ENCODE measurements at regions of chr22 and their contacts with region 1.

Region 1: DNA sequence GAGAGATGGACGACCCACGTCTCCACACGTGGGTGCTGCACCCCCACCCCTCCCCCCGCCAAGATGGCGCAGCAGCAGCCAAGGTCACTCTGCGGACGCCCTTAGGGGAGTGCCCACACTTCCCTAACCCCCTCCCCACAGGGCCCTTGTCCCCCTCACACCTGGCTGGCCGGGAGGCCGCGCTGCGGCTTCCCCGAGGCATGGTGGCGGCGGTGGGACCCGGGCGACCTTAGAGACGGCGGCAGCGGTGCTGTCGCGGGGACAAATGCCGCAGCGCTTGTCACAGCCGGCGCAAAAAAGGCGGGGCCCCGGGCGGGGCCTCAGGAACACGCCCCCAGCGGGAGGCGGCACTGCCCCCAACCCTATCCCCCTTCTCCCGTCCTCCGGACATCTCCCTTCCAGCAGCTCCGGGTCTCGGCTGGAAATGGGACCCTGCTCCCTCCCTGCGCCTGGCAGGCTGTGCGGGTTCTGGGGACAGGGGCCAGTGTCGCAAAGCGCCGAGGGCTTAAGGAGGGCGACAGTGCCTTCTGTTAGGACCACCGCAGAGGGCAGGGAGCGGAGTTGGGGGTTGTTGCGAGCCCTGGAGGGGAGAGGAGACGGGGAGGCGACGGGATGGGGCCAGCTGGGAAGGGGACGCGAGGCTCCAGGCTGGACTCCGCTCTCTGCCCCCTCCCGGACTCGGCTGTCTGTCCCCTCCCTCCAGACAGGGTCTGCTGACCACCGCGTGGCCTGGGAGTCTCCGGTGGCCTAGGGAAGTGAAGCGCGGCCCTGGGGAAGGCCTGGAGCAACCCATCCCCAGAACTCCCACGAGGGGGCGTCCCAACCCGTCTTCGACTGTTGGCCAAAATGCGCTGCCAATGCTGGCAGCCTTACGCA is at the start of gene CHCHD10:
- DNase-seq: peak; percentile 89 to 92
- H3K4me3 ChIP-seq: peak within 1 kb of the TSS; percentile 75
- H3K4me3 Mint-ChIP-seq: peak within 1 kb of the TSS; percentile 87
- H3K27ac Mint-ChIP-seq: peak within 1 kb of the TSS; percentile 78
- H3K4me1 ChIP-seq: peaks cover 22% of the 10 kb centered on the region
- H3K4me1 Mint-ChIP-seq: no peaks in the 10 kb centered on the region
- H3K27me3 ChIP-seq: no peaks in the 10 kb centered on the region
- H3K27me3 Mint-ChIP-seq: no peaks in the 10 kb centered on the region
- CTCF ChIP-seq: peak; percentile 83 to 84
- total RNA-seq, gene CHCHD10: 178 and 189 TPM in 2 replicates

Region 2: GRCh38 chr22:23750714-23751440 is 17.0 kb before region 1 on chr22 and contains the start of gene ZNF70:
- CTCF ChIA-PET with region 1: interaction called, 5 read pairs
- POLR2A ChIA-PET with region 1: interaction called, 10 read pairs
- intact Hi-C with region 1: loop called (anchors 1 kb)
- DNase-seq: peak; percentile 92 to 93
- H3K4me3 ChIP-seq: peak within 1 kb of the TSS; percentile 85
- H3K4me3 Mint-ChIP-seq: peak within 1 kb of the TSS; percentile 89
- H3K27ac Mint-ChIP-seq: peak within 1 kb of the TSS; percentile 77
- H3K4me1 ChIP-seq: 0 out of 2 replicates have a peak, but pooled peaks cover 3% of the 10 kb centered on the region
- H3K4me1 Mint-ChIP-seq: peaks cover 11% of the 10 kb centered on the region
- H3K27me3 ChIP-seq: no peaks in the 10 kb centered on the region
- H3K27me3 Mint-ChIP-seq: no peaks in the 10 kb centered on the region
- CTCF ChIP-seq: peak in 1 of 2 experiments; percentile 61
- total RNA-seq, gene ZNF70: 5.4 and 5.8 TPM in 2 replicates

Region 3: DNA sequence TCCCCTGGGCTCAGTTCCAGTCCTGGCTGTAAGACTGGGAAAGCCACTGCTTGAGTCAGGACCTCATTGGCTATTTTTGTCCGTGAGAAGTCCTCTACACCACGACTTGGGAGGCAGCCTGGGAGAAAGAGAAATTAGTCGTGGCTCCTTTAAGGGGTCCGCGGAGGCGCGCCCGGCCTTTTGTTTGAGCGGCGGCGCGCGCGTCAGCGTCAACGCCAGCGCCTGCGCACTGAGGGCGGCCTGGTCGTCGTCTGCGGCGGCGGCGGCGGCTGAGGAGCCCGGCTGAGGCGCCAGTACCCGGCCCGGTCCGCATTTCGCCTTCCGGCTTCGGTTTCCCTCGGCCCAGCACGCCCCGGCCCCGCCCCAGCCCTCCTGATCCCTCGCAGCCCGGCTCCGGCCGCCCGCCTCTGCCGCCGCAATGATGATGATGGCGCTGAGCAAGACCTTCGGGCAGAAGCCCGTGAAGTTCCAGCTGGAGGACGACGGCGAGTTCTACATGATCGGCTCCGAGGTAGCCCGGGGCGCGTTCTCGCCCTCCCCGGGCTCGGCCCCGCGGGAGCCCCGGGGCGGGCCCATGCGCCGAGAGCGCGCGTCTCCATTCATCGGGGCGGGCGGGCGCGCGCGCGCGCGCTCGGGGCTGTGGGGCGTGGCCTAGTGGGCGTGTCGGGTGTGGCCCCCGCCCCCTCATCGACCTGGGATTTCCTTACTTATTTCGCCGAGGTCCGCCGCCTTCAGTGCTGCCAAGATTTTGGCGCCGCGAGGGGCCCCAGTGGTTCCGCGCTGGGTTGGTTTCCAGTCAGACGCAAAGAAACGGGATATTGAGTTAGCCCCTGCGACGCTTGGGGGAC is 19.1 kb after region 1 on chr22 and contains the start of gene SMARCB1:
- CTCF ChIA-PET with region 1: interaction called, 4 read pairs
- POLR2A ChIA-PET with region 1: interaction called, 3 read pairs
- intact Hi-C with region 1: loop called (anchors 1 kb)
- DNase-seq: peak; percentile 84 to 91
- H3K4me3 ChIP-seq: peak within 1 kb of the TSS; percentile 94
- H3K4me3 Mint-ChIP-seq: peak within 1 kb of the TSS; percentile 89
- H3K27ac Mint-ChIP-seq: peak within 1 kb of the TSS; percentile 36
- H3K4me1 ChIP-seq: peaks cover 13% of the 10 kb centered on the region
- H3K4me1 Mint-ChIP-seq: no peaks in the 10 kb centered on the region
- H3K27me3 ChIP-seq: no peaks in the 10 kb centered on the region
- H3K27me3 Mint-ChIP-seq: no peaks in the 10 kb centered on the region
- CTCF ChIP-seq: no peak
- total RNA-seq, gene SMARCB1: 154 and 157 TPM in 2 replicates

Region 4: GRCh38 chr22:23838681-23839468 is 71.0 kb after region 1 on chr22 and contains the start of gene DERL3:
- CTCF ChIA-PET with region 1: no interaction called
- POLR2A ChIA-PET with region 1: interaction called, 3 read pairs
- intact Hi-C with region 1: loop called (anchors 2 kb)
- DNase-seq: peak; percentile 99
- H3K4me3 ChIP-seq: peak within 1 kb of the TSS; percentile 71
- H3K4me3 Mint-ChIP-seq: peak within 1 kb of the TSS; percentile 95
- H3K27ac Mint-ChIP-seq: peak within 1 kb of the TSS; percentile 100
- H3K4me1 ChIP-seq: no peaks in the 10 kb centered on the region
- H3K4me1 Mint-ChIP-seq: peaks cover 7% of the 10 kb centered on the region
- H3K27me3 ChIP-seq: no peaks in the 10 kb centered on the region
- H3K27me3 Mint-ChIP-seq: no peaks in the 10 kb centered on the region
- CTCF ChIP-seq: no peak
- total RNA-seq, gene DERL3: 4.4 and 5.4 TPM in 2 replicates

Region 5: DNA sequence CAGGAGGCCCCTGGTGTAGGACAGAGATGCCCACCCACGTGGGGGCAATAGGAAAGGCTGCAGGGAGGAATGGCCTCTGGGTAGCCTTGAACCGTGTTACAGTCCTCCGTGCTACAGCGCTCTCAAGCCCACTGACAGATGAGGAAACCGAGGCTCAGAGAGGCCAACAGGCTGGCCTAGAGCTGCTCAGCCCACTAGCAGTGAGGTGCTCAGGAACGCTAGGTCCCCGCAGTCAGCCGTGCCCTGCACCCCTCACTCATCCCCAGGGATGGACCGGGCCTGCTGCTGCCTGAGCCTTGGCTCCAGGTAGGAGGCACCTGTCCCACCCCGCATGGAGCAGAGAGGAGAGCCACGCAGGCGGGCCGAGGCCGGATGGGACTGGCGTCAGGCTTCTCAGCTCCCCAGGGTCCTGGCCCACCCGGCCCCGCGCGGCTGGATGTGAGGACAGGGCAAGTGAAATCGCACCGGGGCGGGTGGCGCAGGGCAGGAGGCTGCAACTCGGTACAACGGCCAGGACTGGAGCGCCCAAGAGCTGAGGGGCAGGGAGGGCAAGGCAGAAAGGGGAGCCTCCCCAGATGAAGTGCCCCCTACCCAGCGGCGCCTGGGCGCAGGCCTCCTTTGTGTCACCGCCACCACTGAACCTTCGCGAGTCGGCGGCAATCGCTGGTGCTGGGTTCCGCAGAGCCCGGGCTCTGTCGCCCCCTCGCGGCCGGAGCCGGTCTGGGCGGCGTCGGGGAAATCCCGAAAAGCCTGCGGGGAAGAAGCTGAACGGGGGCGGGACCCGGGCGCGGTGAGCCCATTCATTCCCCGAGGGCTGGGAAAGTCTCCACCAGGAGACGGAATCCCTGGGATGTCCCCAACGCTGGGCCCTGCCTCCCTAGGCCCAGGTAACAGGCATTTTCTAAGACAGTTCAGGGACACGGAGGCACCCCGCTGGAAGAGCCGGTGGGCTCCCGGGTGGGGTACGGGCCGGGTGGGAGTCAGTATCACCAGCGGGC is 81.4 kb after region 1 on chr22:
- CTCF ChIA-PET with region 1: interaction called, 18 read pairs
- POLR2A ChIA-PET with region 1: interaction called, 3 read pairs
- intact Hi-C with region 1: no loop called
- DNase-seq: peak; percentile 85 to 95
- H3K4me3 ChIP-seq: no peak overlapping the region
- H3K4me3 Mint-ChIP-seq: peak overlapping the region; percentile 40
- H3K27ac Mint-ChIP-seq: no peak overlapping the region
- H3K4me1 ChIP-seq: peaks cover 8% of the 10 kb centered on the region
- H3K4me1 Mint-ChIP-seq: no peaks in the 10 kb centered on the region
- H3K27me3 ChIP-seq: no peaks in the 10 kb centered on the region
- H3K27me3 Mint-ChIP-seq: no peaks in the 10 kb centered on the region
- CTCF ChIP-seq: peak; percentile 92 to 96

Region 6: DNA sequence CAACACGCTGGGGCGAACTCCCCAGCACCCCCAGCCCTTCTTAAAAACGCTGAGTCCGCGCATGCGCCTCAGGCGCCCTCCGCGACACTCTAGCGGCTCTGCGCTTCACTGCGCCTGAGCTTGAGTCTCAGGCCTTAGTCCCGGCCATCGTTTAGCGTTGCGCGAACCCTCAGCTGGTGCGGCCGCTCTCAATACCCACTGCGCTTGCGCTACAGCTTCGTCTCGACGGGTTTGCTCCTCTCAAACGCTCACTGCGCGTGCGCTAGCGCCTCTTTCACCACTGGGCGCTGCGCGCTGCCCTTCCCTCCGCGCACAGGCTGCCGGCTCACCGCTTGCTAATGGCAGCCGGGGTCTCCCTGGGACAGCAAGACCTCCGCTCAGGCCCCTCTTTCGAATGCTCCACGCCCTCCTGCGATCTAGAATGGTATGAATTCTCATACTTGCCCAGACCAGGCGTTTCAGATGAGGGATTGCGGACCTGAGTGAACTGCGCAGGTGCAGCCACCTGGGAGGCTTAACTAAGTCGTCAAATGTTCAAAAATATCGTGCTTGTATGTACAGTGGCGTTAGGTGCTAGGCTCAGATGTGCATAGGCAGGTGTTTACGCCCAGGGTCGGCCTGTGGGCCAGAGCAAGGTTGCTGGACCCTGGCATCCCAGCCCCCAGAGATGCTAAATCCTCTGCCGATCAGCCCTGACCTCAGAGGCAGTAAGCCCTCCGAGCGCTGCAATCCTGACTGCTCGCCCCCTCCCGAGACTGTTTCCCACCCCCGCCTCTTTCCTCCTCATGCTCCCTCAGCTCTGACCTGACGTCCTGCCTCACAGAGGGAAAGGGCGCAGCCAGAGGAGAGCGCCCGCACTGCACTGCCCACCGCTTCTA is 89.9 kb after region 1 on chr22 and contains the start of gene SLC2A11:
- CTCF ChIA-PET with region 1: interaction called, 7 read pairs
- POLR2A ChIA-PET with region 1: interaction called, 20 read pairs
- intact Hi-C with region 1: no loop called
- DNase-seq: peak; percentile 95 to 97
- H3K4me3 ChIP-seq: peak within 1 kb of the TSS; percentile 53
- H3K4me3 Mint-ChIP-seq: peak within 1 kb of the TSS; percentile 80
- H3K27ac Mint-ChIP-seq: peak within 1 kb of the TSS; percentile 79
- H3K4me1 ChIP-seq: 0 out of 2 replicates have a peak, but pooled peaks cover 3% of the 10 kb centered on the region
- H3K4me1 Mint-ChIP-seq: peaks cover 7% of the 10 kb centered on the region
- H3K27me3 ChIP-seq: no peaks in the 10 kb centered on the region
- H3K27me3 Mint-ChIP-seq: no peaks in the 10 kb centered on the region
- CTCF ChIP-seq: no peak
- total RNA-seq, gene SLC2A11: 29.5 and 32.4 TPM in 2 replicates

Region 7: DNA sequence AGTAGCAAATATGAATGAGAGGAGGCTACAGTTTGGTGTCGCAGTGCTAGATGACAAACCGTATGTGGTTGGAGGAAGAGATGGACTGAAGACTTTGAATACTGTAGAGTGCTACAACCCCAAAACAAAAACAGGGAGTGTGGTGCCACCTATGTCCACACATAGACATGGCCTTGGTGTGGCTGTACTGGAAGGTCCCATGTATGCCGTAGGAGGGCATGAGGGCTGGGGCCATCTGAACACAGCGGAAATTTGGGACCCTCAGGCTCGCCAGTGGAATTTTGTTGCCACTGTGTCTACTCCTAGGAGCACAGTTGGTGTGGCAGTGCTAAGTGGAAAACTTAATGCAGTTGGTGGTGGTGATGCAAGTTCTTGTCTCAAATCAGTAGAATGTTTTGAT is 160.3 kb after region 1 on chr22:
- CTCF ChIA-PET with region 1: no interaction called
- POLR2A ChIA-PET with region 1: no interaction called
- intact Hi-C with region 1: no loop called
- DNase-seq: no peak
- H3K4me3 ChIP-seq: no peak overlapping the region
- H3K4me3 Mint-ChIP-seq: no peak overlapping the region
- H3K27ac Mint-ChIP-seq: peak overlapping the region; percentile 27
- H3K4me1 ChIP-seq: no peaks in the 10 kb centered on the region; the same call in 1 of the 2 replicates
- H3K4me1 Mint-ChIP-seq: peaks cover 7% of the 10 kb centered on the region
- H3K27me3 ChIP-seq: no peaks in the 10 kb centered on the region
- H3K27me3 Mint-ChIP-seq: no peaks in the 10 kb centered on the region
- CTCF ChIP-seq: no peak

Region 8: DNA sequence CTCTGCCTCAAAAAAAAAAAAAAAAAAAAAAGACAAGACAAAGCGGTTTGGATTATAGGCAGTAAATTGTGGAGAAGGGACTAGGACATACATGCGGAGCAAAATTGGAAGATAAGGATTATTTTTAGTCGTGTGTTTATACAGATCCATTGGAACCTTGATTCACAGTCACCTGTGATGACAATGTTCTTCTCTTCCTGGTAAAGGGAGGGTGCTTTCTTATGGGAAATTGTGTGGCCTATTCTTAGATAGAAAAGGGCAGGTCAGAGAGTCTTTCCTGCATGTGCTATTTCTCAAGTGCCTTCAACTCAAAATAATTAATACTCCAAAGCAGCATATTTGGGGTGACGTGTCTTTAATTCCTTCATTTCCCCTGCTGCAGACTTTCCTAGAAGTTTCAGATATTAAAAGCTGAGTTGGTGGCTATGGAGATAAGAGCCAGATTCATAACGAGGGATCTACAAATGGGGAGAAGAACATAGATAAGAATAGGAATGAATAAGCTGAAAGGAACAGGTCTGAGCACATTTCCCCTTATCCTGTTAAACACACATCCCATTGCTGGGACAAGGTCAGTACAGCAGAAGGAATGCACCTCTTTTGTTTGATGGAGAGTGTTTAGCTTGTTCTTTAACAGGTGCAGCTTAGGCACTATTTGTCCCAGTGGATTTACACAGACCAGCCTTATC is 170.6 kb after region 1 on chr22:
- CTCF ChIA-PET with region 1: no interaction called
- POLR2A ChIA-PET with region 1: no interaction called
- intact Hi-C with region 1: no loop called
- DNase-seq: peak; percentile 68 to 81
- H3K4me3 ChIP-seq: no peak overlapping the region
- H3K4me3 Mint-ChIP-seq: peak overlapping the region; percentile 40
- H3K27ac Mint-ChIP-seq: peak overlapping the region; percentile 88
- H3K4me1 ChIP-seq: peaks cover 16% of the 10 kb centered on the region
- H3K4me1 Mint-ChIP-seq: peaks cover 13% of the 10 kb centered on the region
- H3K27me3 ChIP-seq: no peaks in the 10 kb centered on the region
- H3K27me3 Mint-ChIP-seq: no peaks in the 10 kb centered on the region
- CTCF ChIP-seq: no peak